GM12878 (cell line): ENCODE measurements at regions of chr2 and their contacts with region 1.

Region 1: GRCh38 chr2:68467077-68467960 is at the starts of genes APLF and FBXO48:
- DNase-seq: peak; percentile 95
- ATAC-seq: peak; percentile 96
- H3K4me3 ChIP-seq: peak within 1 kb of the TSS; percentile 80
- H3K27ac ChIP-seq: peak within 1 kb of the TSS; percentile 74
- H3K4me1 ChIP-seq: peaks cover 11% of the 10 kb centered on the region; the same call in 1 of the 2 replicates
- H3K27me3 ChIP-seq: no peaks in the 10 kb centered on the region
- CTCF ChIP-seq: no peak
- EP300 ChIP-seq: no peak
- POLR2A ChIP-seq: peak; percentile 77
- RAD21 ChIP-seq: no peak
- polyA plus RNA-seq, gene APLF: 0.66 to 0.69 TPM
- polyA plus RNA-seq, gene FBXO48: 0.90 to 1.1 TPM

Region 2: GRCh38 chr2:68362069-68362468 is 105.2 kb before region 1 on chr2:
- CTCF ChIA-PET with region 1: interaction called, 12 read pairs
- POLR2A ChIA-PET with region 1: no interaction called
- RAD21 ChIA-PET with region 1: interaction called, 3 read pairs
- SMC1A ChIA-PET with region 1: interaction called, 5 read pairs
- in situ Hi-C with region 1: no loop called
- intact Hi-C with region 1: no loop called
- DNase-seq: peak; percentile 78
- ATAC-seq: peak; percentile 54
- H3K4me3 ChIP-seq: peak overlapping the region; percentile 33; the same call in 1 of the 2 replicates
- H3K27ac ChIP-seq: peak overlapping the region; percentile 94
- H3K4me1 ChIP-seq: peaks cover 21% of the 10 kb centered on the region
- H3K27me3 ChIP-seq: no peaks in the 10 kb centered on the region
- CTCF ChIP-seq: peak; percentile 75 to 92 (median 81)
- EP300 ChIP-seq: peak; percentile 34 to 68; a peak in 1 of 4 replicates
- POLR2A ChIP-seq: peak; percentile 68
- RAD21 ChIP-seq: peak; percentile 97

Region 3: GRCh38 chr2:68487773-68488355 is 20.5 kb after region 1 on chr2:
- CTCF ChIA-PET with region 1: interaction called, 45 read pairs
- POLR2A ChIA-PET with region 1: interaction called, 7 read pairs
- RAD21 ChIA-PET with region 1: interaction called, 17 read pairs
- SMC1A ChIA-PET with region 1: interaction called, 11 read pairs
- in situ Hi-C with region 1: no loop called
- intact Hi-C with region 1: no loop called
- DNase-seq: no peak
- ATAC-seq: peak; percentile 74
- H3K4me3 ChIP-seq: no peak overlapping the region
- H3K27ac ChIP-seq: no peak overlapping the region
- H3K4me1 ChIP-seq: peaks cover 5% of the 10 kb centered on the region; the same call in 1 of the 2 replicates
- H3K27me3 ChIP-seq: no peaks in the 10 kb centered on the region
- CTCF ChIP-seq: peak in 2 of 3 experiments; percentile 26 to 49; a peak in 3 of 6 replicates
- EP300 ChIP-seq: no peak
- POLR2A ChIP-seq: no peak
- RAD21 ChIP-seq: peak; percentile 37

Region 4: GRCh38 chr2:68715353-68716041 is 248.2 kb after region 1 on chr2:
- CTCF ChIA-PET with region 1: interaction called, 173 read pairs
- POLR2A ChIA-PET with region 1: interaction called, 3 read pairs
- RAD21 ChIA-PET with region 1: interaction called, 17 read pairs
- SMC1A ChIA-PET with region 1: interaction called, 23 read pairs
- in situ Hi-C with region 1: no loop called
- intact Hi-C with region 1: loop called (anchors 1 kb)
- DNase-seq: peak; percentile 59
- ATAC-seq: peak; percentile 90
- H3K4me3 ChIP-seq: 0 out of 2 replicates have a peak overlapping the region, but pooled peaks have one; percentile 16
- H3K27ac ChIP-seq: peak overlapping the region; percentile 66; the same call in 1 of the 2 replicates
- H3K4me1 ChIP-seq: peaks cover 31% of the 10 kb centered on the region
- H3K27me3 ChIP-seq: no peaks in the 10 kb centered on the region
- CTCF ChIP-seq: peak; percentile 74 to 81 (median 77)
- EP300 ChIP-seq: no peak
- POLR2A ChIP-seq: no peak
- RAD21 ChIP-seq: peak; percentile 78

Region 5: GRCh38 chr2:68909793-68910674 is 442.7 kb after region 1 on chr2:
- CTCF ChIA-PET with region 1: interaction called, 48 read pairs
- POLR2A ChIA-PET with region 1: interaction called, 3 read pairs
- RAD21 ChIA-PET with region 1: interaction called, 9 read pairs
- SMC1A ChIA-PET with region 1: interaction called, 7 read pairs
- in situ Hi-C with region 1: loop called (anchors 5 kb)
- intact Hi-C with region 1: loop called (anchors 1 kb)
- DNase-seq: peak; percentile 40
- ATAC-seq: peak; percentile 89
- H3K4me3 ChIP-seq: no peak overlapping the region
- H3K27ac ChIP-seq: no peak overlapping the region
- H3K4me1 ChIP-seq: peaks cover 16% of the 10 kb centered on the region
- H3K27me3 ChIP-seq: no peaks in the 10 kb centered on the region; a peak in 1 of 4 replicates
- CTCF ChIP-seq: peak; percentile 84 to 94 (median 90)
- EP300 ChIP-seq: no peak
- POLR2A ChIP-seq: no peak
- RAD21 ChIP-seq: peak; percentile 97

Region 6: GRCh38 chr2:69306822-69307578 is 839.7 kb after region 1 on chr2:
- CTCF ChIA-PET with region 1: no interaction called
- POLR2A ChIA-PET with region 1: no interaction called
- RAD21 ChIA-PET with region 1: no interaction called
- SMC1A ChIA-PET with region 1: no interaction called
- in situ Hi-C with region 1: no loop called
- intact Hi-C with region 1: loop called (anchors 5 kb)
- DNase-seq: no peak
- ATAC-seq: peak; percentile 97
- H3K4me3 ChIP-seq: peak overlapping the region; percentile 45; the same call in 1 of the 2 replicates
- H3K27ac ChIP-seq: no peak overlapping the region
- H3K4me1 ChIP-seq: 0 out of 2 replicates have a peak, but pooled peaks cover 5% of the 10 kb centered on the region
- H3K27me3 ChIP-seq: peaks cover 4 to 18% of the 10 kb centered on the region in 2 experiments
- CTCF ChIP-seq: peak; percentile 66 to 91 (median 79)
- EP300 ChIP-seq: no peak
- POLR2A ChIP-seq: peak; percentile 51
- RAD21 ChIP-seq: peak; percentile 85